MCF 10A (cell line): ENCODE measurements at regions of chr7 and their contacts with region 1.

Region 1: DNA sequence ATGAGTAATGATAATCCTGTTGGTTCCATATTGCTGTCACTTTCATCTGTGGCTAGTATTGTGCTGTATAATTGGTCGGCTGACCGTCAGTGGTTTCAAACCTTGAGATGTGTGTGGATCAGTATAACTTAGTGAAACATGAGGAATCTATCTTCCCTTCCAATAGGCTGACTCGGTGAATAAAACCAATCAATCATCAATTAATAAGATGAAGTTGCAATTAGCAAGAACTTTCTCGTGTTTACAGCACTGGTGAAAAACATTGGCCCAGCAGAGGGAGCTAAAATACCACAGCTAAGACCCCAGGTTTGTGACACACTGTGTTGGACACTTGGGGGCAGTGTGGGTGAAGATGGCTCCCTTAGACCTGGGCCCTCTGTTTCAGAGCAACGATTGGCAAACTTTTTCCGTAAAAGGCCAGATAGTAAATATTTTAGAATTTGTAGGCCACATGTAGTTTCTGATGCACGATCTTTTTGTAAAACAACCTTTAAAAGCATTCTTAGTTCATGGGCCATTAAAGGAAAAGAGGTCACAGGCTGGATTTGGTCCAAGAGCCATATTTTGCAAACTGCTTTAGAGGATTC is 47.8 kb downstream of the STRA8 start:
- DNase-seq: peak; percentile 90
- H3K4me3 Mint-ChIP-seq: no peak overlapping the region
- H3K27ac Mint-ChIP-seq: no peak overlapping the region
- H3K4me1 Mint-ChIP-seq: peaks cover 11% of the 10 kb centered on the region
- H3K27me3 Mint-ChIP-seq: peaks cover 19% of the 10 kb centered on the region
- CTCF ChIP-seq: peak; percentile 98

Region 2: DNA sequence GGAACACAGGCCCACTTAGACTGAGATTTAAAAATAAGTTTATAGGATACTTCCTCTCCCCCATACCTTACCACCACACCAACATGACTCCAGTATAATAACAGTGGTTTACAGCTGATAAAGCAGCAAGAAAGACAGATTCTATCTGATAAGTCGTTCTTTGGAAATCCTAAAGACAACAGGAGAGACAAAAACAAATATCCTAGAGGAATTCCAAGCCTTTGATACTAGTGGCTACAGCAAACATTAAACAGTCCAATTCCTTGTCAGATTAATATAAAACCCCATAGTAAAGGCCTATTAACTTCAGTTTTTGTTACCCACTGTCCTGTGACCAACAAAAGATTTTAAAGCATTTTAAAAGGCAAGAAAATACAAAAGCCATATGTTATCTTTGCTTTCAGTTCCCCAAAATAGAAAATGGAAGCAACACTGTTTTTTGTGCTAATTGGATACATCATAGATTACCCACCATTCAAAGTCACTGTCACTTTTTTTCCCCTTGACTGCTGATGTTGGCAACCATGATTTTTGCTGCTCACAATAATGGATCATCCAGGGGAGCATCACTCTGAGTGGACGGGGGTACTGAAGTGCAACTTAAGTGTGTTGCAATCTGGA is 186.1 kb before region 1 on chr7:
- CTCF ChIA-PET with region 1: no interaction called
- POLR2A ChIA-PET with region 1: no interaction called
- intact Hi-C with region 1: no loop called
- DNase-seq: no peak
- H3K4me3 Mint-ChIP-seq: no peak overlapping the region
- H3K27ac Mint-ChIP-seq: no peak overlapping the region
- H3K4me1 Mint-ChIP-seq: no peaks in the 10 kb centered on the region
- H3K27me3 Mint-ChIP-seq: no peaks in the 10 kb centered on the region
- CTCF ChIP-seq: no peak

Region 3: DNA sequence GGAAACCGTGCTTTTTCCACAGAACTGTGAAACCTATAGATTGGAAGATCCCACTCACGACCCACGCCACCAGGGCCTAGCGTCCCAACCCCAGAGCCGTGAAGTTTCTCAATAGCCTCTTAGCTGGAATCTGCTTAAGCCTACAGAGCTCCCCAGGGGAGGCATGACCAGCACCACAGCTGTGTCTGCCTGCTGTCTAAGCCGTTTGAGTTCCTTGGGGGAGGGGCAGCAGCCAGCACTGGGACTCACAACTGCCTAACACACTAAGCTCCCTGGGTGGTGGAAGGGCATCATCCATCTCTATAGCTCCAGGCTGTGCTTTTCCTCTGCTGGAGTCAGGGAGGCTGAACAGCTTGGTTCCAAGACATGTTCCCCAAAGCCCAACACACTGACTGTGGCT is 159.6 kb before region 1 on chr7:
- CTCF ChIA-PET with region 1: no interaction called
- POLR2A ChIA-PET with region 1: no interaction called
- intact Hi-C with region 1: no loop called
- DNase-seq: no peak
- H3K4me3 Mint-ChIP-seq: no peak overlapping the region
- H3K27ac Mint-ChIP-seq: no peak overlapping the region
- H3K4me1 Mint-ChIP-seq: no peaks in the 10 kb centered on the region
- H3K27me3 Mint-ChIP-seq: peaks cover 42% of the 10 kb centered on the region
- CTCF ChIP-seq: no peak

Region 4: GRCh38 chr7:135291809-135292253 is 10.4 kb after region 1 on chr7:
- CTCF ChIA-PET with region 1: interaction called, 10 read pairs
- POLR2A ChIA-PET with region 1: interaction called, 5 read pairs
- intact Hi-C with region 1: no loop called
- DNase-seq: peak; percentile 80
- H3K4me3 Mint-ChIP-seq: no peak overlapping the region
- H3K27ac Mint-ChIP-seq: peak overlapping the region; percentile 83
- H3K4me1 Mint-ChIP-seq: peaks cover 13% of the 10 kb centered on the region
- H3K27me3 Mint-ChIP-seq: no peaks in the 10 kb centered on the region
- CTCF ChIP-seq: no peak

Region 5: DNA sequence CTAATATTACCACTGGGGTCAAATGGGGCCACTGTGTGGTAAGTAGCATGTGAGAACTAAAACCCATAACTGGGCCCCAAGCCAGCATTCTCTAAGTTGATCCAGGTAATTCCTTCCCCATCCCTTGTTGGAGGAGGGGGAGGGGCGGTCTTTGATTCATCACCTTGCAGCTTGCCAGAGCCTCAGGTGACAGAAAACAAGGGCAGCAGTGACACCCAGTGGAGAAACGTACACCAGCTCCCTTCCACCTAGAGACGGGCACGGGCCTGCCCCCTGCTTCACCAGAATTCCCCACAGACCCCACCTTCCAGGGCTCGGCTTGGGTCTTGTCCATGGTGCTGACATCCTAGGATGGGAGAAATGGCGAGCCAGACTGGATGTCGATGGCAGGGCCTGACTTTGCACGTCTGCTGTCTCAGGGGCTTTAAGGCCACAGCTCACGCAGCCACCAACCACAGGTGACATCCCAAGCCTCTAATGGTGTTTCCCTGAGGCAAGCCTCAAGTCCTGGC is 54.2 kb after region 1 on chr7:
- CTCF ChIA-PET with region 1: interaction called, 263 read pairs
- POLR2A ChIA-PET with region 1: interaction called, 27 read pairs
- intact Hi-C with region 1: loop called (anchors 1 kb)
- DNase-seq: peak; percentile 96
- H3K4me3 Mint-ChIP-seq: no peak overlapping the region
- H3K27ac Mint-ChIP-seq: no peak overlapping the region
- H3K4me1 Mint-ChIP-seq: peaks cover 12% of the 10 kb centered on the region
- H3K27me3 Mint-ChIP-seq: no peaks in the 10 kb centered on the region
- CTCF ChIP-seq: peak; percentile 77

Region 6: GRCh38 chr7:135509903-135510602 is 228.6 kb after region 1 on chr7 and contains the start of gene CNOT4:
- CTCF ChIA-PET with region 1: interaction called, 4 read pairs
- POLR2A ChIA-PET with region 1: no interaction called
- intact Hi-C with region 1: loop called (anchors 1 kb)
- DNase-seq: peak; percentile 95
- H3K4me3 Mint-ChIP-seq: no peak within 1 kb of the TSS
- H3K27ac Mint-ChIP-seq: no peak within 1 kb of the TSS
- H3K4me1 Mint-ChIP-seq: peaks cover 17% of the 10 kb centered on the region
- H3K27me3 Mint-ChIP-seq: no peaks in the 10 kb centered on the region
- CTCF ChIP-seq: no peak
- total RNA-seq, gene CNOT4: 18.5 and 19.6 TPM in 2 replicates

Region 7: DNA sequence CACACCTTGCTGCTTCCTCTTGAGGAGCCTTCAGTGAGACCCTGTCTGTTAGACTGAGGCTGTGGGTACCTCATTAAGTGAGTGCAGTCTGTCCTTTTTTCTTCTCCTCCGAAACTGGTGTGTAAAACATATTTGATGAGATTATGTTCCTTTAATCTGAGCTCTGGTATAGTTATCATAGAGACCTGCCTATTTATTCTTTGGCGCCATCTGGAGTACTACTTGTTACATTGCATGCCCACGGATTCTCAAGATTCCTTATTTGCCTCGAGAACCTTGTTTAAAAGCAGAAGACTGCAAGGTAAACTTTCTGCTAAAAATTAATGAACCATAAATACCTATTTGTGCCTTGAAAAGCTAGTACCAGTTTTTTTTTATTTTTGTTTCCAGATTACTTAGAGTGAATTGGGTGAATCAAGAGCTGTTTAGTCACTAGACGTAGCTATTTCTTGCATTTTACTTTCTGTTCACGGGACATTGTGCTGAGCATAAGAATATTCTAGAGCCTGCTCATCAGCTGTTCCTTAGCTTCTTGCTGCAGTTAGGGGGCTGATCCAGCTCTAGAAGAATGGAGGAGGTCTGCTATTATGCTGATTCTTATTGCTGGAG is 363.9 kb after region 1 on chr7:
- CTCF ChIA-PET with region 1: interaction called, 76 read pairs
- POLR2A ChIA-PET with region 1: no interaction called
- intact Hi-C with region 1: loop called (anchors 1 kb)
- DNase-seq: peak; percentile 57
- H3K4me3 Mint-ChIP-seq: no peak overlapping the region
- H3K27ac Mint-ChIP-seq: no peak overlapping the region
- H3K4me1 Mint-ChIP-seq: no peaks in the 10 kb centered on the region
- H3K27me3 Mint-ChIP-seq: no peaks in the 10 kb centered on the region
- CTCF ChIP-seq: peak; percentile 46